Heart left ventricle (tissue), 16 donors: ENCODE measurements at regions of chr20 and their contacts with region 1.

Region 1: DNA sequence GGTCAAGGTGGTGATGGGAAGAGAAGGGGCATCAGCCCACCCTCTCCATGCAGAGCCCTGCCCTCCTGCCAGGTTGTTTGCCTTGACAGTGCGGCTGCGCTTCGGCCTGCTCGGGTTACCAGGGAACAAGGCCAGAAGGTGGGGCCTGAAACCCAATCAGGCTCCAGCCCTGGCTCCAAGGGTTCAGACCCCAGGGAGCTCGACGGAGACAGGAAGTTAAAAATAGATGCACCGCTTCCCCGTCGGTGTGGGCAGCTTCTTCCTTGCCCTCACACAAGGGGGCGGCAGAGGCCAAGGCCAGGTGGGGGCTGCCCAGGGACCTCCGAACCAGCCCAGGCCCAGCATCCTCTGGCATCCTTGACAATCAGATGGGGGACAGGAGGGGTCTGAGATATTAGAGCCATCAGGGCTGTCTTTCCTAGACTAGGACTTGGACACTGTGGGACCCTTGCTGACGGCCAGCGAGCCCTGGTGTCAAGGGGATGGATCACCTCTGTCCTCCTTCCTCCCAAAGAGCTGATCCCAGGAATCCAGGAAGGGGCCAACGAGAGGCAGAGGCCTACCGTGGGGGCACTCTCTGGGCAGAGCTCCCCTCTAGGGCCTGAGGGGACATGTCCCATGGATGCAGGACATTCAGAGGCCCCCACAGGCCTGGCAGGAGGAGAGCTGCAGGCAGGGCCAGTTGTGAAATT is 65.2 kb downstream of the RIPOR3 start:
- DNase-seq: peak; percentile 61 to 83 (median 69)
- ATAC-seq: peak; percentile 47 to 80 (median 69)
- H3K4me3 ChIP-seq: no peak overlapping the region
- H3K27ac ChIP-seq: peak overlapping the region in 6 of 12 donors; percentile 2 to 50 (median 22)
- H3K4me1 ChIP-seq: peaks cover 0 to 22% (median 8%) of the 10 kb centered on the region in 12 donors
- H3K27me3 ChIP-seq: no peaks in the 10 kb centered on the region
- CTCF ChIP-seq: peak; percentile 29 to 69 (median 54)
- POLR2A ChIP-seq: no peak

Region 2: GRCh38 chr20:49594143-49594930 is 1031.8 kb before region 1 on chr20:
- intact Hi-C with region 1: no loop called
- DNase-seq: peak; percentile 55 to 80 (median 67)
- ATAC-seq: peak; percentile 40 to 80 (median 79)
- H3K4me3 ChIP-seq: peak overlapping the region in 1 of 12 donors; percentile 38
- H3K27ac ChIP-seq: peak overlapping the region; percentile 26 to 87 (median 70)
- H3K4me1 ChIP-seq: peaks cover 0 to 60% (median 33%) of the 10 kb centered on the region in 12 donors
- H3K27me3 ChIP-seq: no peaks in the 10 kb centered on the region
- CTCF ChIP-seq: no peak
- POLR2A ChIP-seq: no peak

Region 3: GRCh38 chr20:50713657-50714101 is 87.5 kb after region 1 on chr20:
- intact Hi-C with region 1: loop called in 3 of 10 experiments (anchors 2 to 10 kb)
- DNase-seq: peak in 1 of 5 donors; percentile 22
- ATAC-seq: peak in 3 of 4 donors; percentile 57 to 65 (median 64)
- H3K4me3 ChIP-seq: no peak overlapping the region
- H3K27ac ChIP-seq: no peak overlapping the region
- H3K4me1 ChIP-seq: peaks cover 0 to 7% (median 0%) of the 10 kb centered on the region in 12 donors
- H3K27me3 ChIP-seq: no peaks in the 10 kb centered on the region
- CTCF ChIP-seq: peak; percentile 20 to 61 (median 45)
- POLR2A ChIP-seq: no peak

Region 4: GRCh38 chr20:50724851-50725721 is 99.0 kb after region 1 on chr20:
- intact Hi-C with region 1: loop called in 1 of 10 experiments (anchors 5 kb)
- DNase-seq: peak; percentile 62 to 93 (median 75)
- ATAC-seq: peak; percentile 71 to 92 (median 86)
- H3K4me3 ChIP-seq: no peak overlapping the region
- H3K27ac ChIP-seq: peak overlapping the region; percentile 64 to 89 (median 76)
- H3K4me1 ChIP-seq: peaks cover 0 to 36% (median 16%) of the 10 kb centered on the region in 12 donors
- H3K27me3 ChIP-seq: peaks cover 0 to under 1% (median 0%) of the 10 kb centered on the region in 9 donors
- CTCF ChIP-seq: no peak
- POLR2A ChIP-seq: peak in 1 of 2 donors; percentile 25

Region 5: DNA sequence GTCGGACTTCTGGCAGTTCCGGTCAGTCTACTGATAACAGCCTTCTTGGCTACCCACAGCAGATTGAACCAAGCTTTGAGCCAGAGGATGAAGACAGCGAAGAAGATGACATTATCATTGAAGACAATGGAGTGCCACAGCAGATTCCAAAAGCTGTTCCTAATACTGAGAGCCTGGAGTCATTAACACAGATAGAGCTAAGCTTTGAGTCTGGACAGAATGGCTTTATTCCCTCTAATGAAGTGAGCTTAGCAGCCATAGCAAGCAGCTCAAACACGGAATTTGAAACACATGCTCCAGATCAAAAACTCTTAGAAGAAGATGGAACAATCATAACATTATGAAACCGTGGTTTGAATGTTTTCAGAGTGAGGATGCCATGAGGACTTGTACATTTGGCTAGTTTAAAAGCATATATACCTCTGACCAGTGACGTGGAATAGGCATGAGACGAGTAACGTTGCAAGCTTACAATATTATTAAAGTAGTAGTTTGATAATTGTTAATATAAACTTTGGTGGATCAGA is 124.1 kb after region 1 on chr20:
- intact Hi-C with region 1: loop called in 8 of 10 experiments (anchors 2 to 10 kb)
- DNase-seq: no peak
- ATAC-seq: peak in 1 of 4 donors; percentile 9
- H3K4me3 ChIP-seq: no peak overlapping the region
- H3K27ac ChIP-seq: no peak overlapping the region
- H3K4me1 ChIP-seq: peaks cover 0 to 26% (median 8%) of the 10 kb centered on the region in 12 donors
- H3K27me3 ChIP-seq: no peaks in the 10 kb centered on the region
- CTCF ChIP-seq: no peak
- POLR2A ChIP-seq: no peak

Region 6: DNA sequence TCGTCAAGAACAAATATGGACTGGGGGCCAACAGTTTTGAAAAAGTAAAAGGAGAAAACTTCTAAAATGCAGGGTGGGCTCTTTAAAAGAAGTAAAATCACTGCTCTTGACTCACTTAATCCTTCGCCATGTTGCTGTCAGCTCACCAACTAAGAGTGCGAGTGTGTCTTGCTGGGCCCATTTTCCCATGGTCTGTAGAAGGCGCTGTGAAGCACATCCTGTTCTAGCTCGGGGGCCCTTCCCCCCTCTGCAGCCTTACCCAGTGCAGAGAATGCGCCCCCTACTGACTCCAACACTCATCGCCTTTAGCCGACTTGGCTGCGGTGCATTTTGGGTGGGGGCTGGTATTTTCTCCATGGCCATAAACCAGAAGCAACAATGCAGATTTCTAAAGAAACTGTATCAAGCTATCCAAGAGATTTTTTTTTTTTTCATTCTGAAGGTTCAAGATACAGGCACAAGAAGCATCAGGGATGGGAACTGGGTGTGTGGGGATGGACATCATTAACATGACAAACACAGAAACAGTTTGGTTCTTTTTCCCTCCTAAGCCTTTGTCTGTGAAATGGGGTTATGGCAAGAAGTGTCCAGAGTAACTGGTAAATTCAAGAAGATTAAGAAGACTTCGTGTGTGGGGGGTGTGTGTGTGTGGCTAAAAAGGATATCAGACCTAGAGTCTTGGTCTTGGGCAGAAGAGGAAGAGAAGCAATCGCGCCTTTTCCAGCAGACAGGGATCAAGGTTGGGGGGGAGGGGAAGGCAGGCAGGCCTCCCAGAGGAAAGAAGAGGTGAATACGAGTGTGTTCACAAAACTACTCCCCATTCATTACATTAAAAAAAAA is 303.4 kb after region 1 on chr20:
- intact Hi-C with region 1: loop called in 1 of 10 experiments (anchors 10 kb)
- DNase-seq: peak; percentile 86 to 92 (median 89)
- ATAC-seq: peak; percentile 71 to 79 (median 74)
- H3K4me3 ChIP-seq: peak overlapping the region; percentile 71 to 92 (median 78)
- H3K27ac ChIP-seq: peak overlapping the region in 11 of 12 donors; percentile 63 to 99 (median 79)
- H3K4me1 ChIP-seq: peaks cover 0 to 62% (median 37%) of the 10 kb centered on the region in 12 donors
- H3K27me3 ChIP-seq: no peaks in the 10 kb centered on the region
- CTCF ChIP-seq: peak; percentile 69 to 92 (median 80)
- POLR2A ChIP-seq: no peak